CD4-positive, alpha-beta T cell (primary cell): ENCODE measurements at regions of chr22 and their contacts with region 1.

Region 1: GRCh38 chr22:19432133-19432851 is at the start of gene MRPL40:
- DNase-seq: peak; percentile 66 to 93 (median 86)
- ATAC-seq: peak; percentile 80
- H3K4me3 ChIP-seq: peak within 1 kb of the TSS; percentile 89
- H3K4me3 Mint-ChIP-seq: peak within 1 kb of the TSS; percentile 97
- H3K27ac ChIP-seq: peak within 1 kb of the TSS; percentile 87 to 88
- H3K27ac Mint-ChIP-seq: peak within 1 kb of the TSS; percentile 93
- H3K4me1 ChIP-seq: peaks cover 35% of the 10 kb centered on the region
- H3K4me1 Mint-ChIP-seq: peaks cover 48% of the 10 kb centered on the region
- H3K27me3 ChIP-seq: no peaks in the 10 kb centered on the region
- H3K27me3 Mint-ChIP-seq: no peaks in the 10 kb centered on the region
- CTCF ChIP-seq: no peak
- total RNA-seq, gene MRPL40: 10.7 to 11.3 TPM

Region 2: GRCh38 chr22:19419464-19420178 is 12.7 kb before region 1 on chr22:
- CTCF ChIA-PET with region 1: interaction called, 3 read pairs
- POLR2A ChIA-PET with region 1: interaction called, 21 read pairs
- intact Hi-C with region 1: no loop called
- DNase-seq: peak in 8 of 14 experiments; percentile 14 to 82 (median 40)
- ATAC-seq: peak; percentile 89
- H3K4me3 ChIP-seq: no peak overlapping the region
- H3K4me3 Mint-ChIP-seq: peak overlapping the region; percentile 36
- H3K27ac ChIP-seq: peak overlapping the region; percentile 54 to 82
- H3K27ac Mint-ChIP-seq: peak overlapping the region; percentile 82
- H3K4me1 ChIP-seq: peaks cover 54% of the 10 kb centered on the region
- H3K4me1 Mint-ChIP-seq: peaks cover 77% of the 10 kb centered on the region
- H3K27me3 ChIP-seq: no peaks in the 10 kb centered on the region
- H3K27me3 Mint-ChIP-seq: no peaks in the 10 kb centered on the region
- CTCF ChIP-seq: no peak

Region 3: DNA sequence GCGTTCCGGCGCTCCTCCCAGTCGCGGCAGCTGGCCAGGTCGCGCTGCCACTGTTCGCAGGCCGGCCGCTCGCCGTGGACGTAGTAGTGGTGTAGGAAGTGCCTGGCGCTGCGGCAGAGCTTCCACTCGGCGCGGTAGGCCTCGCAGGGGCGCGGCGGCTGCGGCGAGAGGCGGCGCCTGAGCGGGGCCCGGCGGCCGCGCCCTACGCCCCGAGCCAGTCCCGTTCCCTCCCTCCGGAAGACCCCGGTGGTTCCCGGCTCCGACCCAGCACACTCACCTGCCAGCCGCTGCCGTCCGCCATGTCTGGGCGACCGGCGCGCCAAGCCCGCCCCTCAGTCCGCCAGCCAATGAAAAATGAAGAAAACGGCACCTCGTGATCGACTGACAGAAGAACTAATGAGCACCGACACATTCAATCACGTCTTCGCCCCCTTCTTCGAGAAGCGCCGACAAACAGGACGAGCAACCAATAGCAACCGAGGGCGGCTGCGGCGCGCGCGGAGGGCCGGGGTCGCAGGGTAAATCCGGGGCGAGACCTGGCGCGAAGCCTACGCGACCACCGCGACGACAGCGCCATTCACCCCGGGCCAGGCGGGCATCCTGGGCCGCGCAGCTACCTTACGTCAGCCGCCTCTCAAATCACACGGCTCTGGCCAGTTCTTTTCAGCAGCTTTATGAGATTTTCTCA is 15.2 kb after region 1 on chr22 and contains the start of gene C22orf39:
- CTCF ChIA-PET with region 1: interaction called, 5 read pairs
- POLR2A ChIA-PET with region 1: interaction called, 94 read pairs
- intact Hi-C with region 1: loop called (anchors 1 to 2 kb)
- DNase-seq: peak; percentile 75 to 96 (median 85)
- ATAC-seq: peak; percentile 92
- H3K4me3 ChIP-seq: peak within 1 kb of the TSS; percentile 88
- H3K4me3 Mint-ChIP-seq: peak within 1 kb of the TSS; percentile 93
- H3K27ac ChIP-seq: peak within 1 kb of the TSS; percentile 82 to 85
- H3K27ac Mint-ChIP-seq: peak within 1 kb of the TSS; percentile 91
- H3K4me1 ChIP-seq: peaks cover 38% of the 10 kb centered on the region
- H3K4me1 Mint-ChIP-seq: peaks cover 52% of the 10 kb centered on the region
- H3K27me3 ChIP-seq: no peaks in the 10 kb centered on the region
- H3K27me3 Mint-ChIP-seq: no peaks in the 10 kb centered on the region
- CTCF ChIP-seq: no peak
- total RNA-seq, gene C22orf39: 30.2 to 32.6 TPM

Region 4: DNA sequence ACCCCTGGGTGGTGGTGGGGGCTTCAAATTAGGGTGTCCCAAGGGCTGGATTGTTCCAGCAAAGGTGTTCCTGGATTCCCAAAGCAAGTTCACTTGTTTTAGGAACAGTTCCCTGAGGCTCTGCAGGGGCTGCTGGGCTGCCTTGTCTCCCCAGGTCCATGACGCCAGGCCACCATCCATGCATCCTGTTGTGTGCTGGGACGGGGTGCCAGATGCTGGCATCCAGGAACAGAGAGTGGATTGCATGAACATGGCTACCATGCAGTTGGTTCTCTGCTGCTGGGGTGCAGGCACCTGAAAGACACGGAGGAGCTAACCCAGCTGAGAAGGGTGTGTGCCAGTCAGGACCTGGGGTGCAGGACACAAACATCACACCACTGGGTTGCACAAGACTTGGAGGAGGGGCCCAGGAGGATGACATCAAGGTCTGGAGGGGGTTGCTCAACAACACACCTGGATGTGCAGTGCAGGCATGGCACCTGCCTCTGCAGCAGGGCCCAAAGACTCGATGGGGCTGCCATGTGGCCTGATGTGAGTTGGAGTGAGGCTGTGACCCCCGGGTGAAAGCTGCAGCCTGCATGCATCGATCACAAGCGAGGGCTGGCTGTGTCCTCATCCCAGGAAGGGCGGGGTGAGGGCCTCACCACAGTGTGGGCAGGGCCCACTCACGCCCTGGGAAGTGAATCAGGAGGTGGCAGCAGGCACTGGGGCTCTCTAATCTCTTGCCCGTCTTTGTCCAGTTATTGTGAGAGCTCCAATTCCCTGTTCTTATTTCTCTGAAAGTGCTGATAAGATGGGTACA is 166.0 kb after region 1 on chr22:
- CTCF ChIA-PET with region 1: no interaction called
- POLR2A ChIA-PET with region 1: interaction called, 10 read pairs
- intact Hi-C with region 1: no loop called
- DNase-seq: peak in 9 of 14 experiments; percentile 18 to 48 (median 42)
- ATAC-seq: peak; percentile 30
- H3K4me3 ChIP-seq: peak overlapping the region; percentile 0
- H3K4me3 Mint-ChIP-seq: peak overlapping the region; percentile 57
- H3K27ac ChIP-seq: peak overlapping the region; percentile 74 to 87
- H3K27ac Mint-ChIP-seq: peak overlapping the region; percentile 93
- H3K4me1 ChIP-seq: peaks cover 51% of the 10 kb centered on the region
- H3K4me1 Mint-ChIP-seq: peaks cover 76% of the 10 kb centered on the region
- H3K27me3 ChIP-seq: no peaks in the 10 kb centered on the region
- H3K27me3 Mint-ChIP-seq: no peaks in the 10 kb centered on the region
- CTCF ChIP-seq: no peak